CD14-positive monocyte (primary cell): ENCODE measurements at regions of chr12 and their contacts with region 1.

Region 1: GRCh38 chr12:133037207-133038005 is at the start of gene ZNF84:
- DNase-seq: peak; percentile 96 to 98 (median 97)
- H3K4me3 ChIP-seq: peak within 1 kb of the TSS; percentile 48 to 78 (median 53)
- H3K4me3 Mint-ChIP-seq: peak within 1 kb of the TSS; percentile 83 to 95
- H3K27ac ChIP-seq: peak within 1 kb of the TSS; percentile 77 to 84
- H3K27ac Mint-ChIP-seq: peak within 1 kb of the TSS; percentile 80 to 96 (median 91)
- H3K4me1 ChIP-seq: peaks cover 12 to 15% of the 10 kb centered on the region in 2 donors
- H3K4me1 Mint-ChIP-seq: peaks cover 7% of the 10 kb centered on the region
- H3K27me3 ChIP-seq: no peaks in the 10 kb centered on the region
- H3K27me3 Mint-ChIP-seq: peaks cover 2 to 4% (median 3%) of the 10 kb centered on the region in 3 donors
- CTCF ChIP-seq: no peak
- polyA plus RNA-seq, gene ZNF84: 3.3 to 5.1 (median 5.1) TPM

Region 2: GRCh38 chr12:132887513-132888351 is 149.7 kb before region 1 on chr12 and contains the start of gene CHFR:
- intact Hi-C with region 1: loop called in 1 of 2 experiments (anchors 5 kb)
- DNase-seq: peak; percentile 98 to 99 (median 99)
- H3K4me3 ChIP-seq: peak within 1 kb of the TSS; percentile 85 to 92 (median 86)
- H3K4me3 Mint-ChIP-seq: peak within 1 kb of the TSS; percentile 97 to 98
- H3K27ac ChIP-seq: peak within 1 kb of the TSS; percentile 89 to 99
- H3K27ac Mint-ChIP-seq: peak within 1 kb of the TSS; percentile 98 to 100 (median 99)
- H3K4me1 ChIP-seq: peaks cover 10 to 15% of the 10 kb centered on the region in 2 donors
- H3K4me1 Mint-ChIP-seq: peaks cover 19% of the 10 kb centered on the region
- H3K27me3 ChIP-seq: no peaks in the 10 kb centered on the region
- H3K27me3 Mint-ChIP-seq: peaks cover 3 to 10% (median 8%) of the 10 kb centered on the region in 3 donors
- CTCF ChIP-seq: no peak
- polyA plus RNA-seq, gene CHFR: 28.0 to 76.3 (median 39.3) TPM

Region 3: GRCh38 chr12:132908145-132909044 is 129.0 kb before region 1 on chr12:
- intact Hi-C with region 1: loop called in 1 of 2 experiments (anchors 10 kb)
- DNase-seq: peak; percentile 56 to 66 (median 66)
- H3K4me3 ChIP-seq: peak overlapping the region; percentile 13 to 76 (median 45)
- H3K4me3 Mint-ChIP-seq: peak overlapping the region; percentile 80 to 94
- H3K27ac ChIP-seq: no peak overlapping the region
- H3K27ac Mint-ChIP-seq: peak overlapping the region in 5 of 7 donors; percentile 21 to 90 (median 70)
- H3K4me1 ChIP-seq: peaks cover 13 to 17% of the 10 kb centered on the region in 2 donors
- H3K4me1 Mint-ChIP-seq: peaks cover 16% of the 10 kb centered on the region
- H3K27me3 ChIP-seq: peaks cover 15 to 52% of the 10 kb centered on the region in 2 donors
- H3K27me3 Mint-ChIP-seq: peaks cover 43 to 59% (median 58%) of the 10 kb centered on the region in 3 donors
- CTCF ChIP-seq: no peak

Region 4: GRCh38 chr12:132956011-132956788 is 81.2 kb before region 1 on chr12 and contains the start of gene ZNF605:
- intact Hi-C with region 1: loop called in 1 of 2 experiments (anchors 5 kb)
- DNase-seq: peak; percentile 64 to 80 (median 69)
- H3K4me3 ChIP-seq: peak within 1 kb of the TSS; percentile 62 to 95 (median 94)
- H3K4me3 Mint-ChIP-seq: peak within 1 kb of the TSS; percentile 92
- H3K27ac ChIP-seq: peak within 1 kb of the TSS; percentile 36 to 76
- H3K27ac Mint-ChIP-seq: peak within 1 kb of the TSS; percentile 25 to 91 (median 82)
- H3K4me1 ChIP-seq: peaks cover 12 to 15% of the 10 kb centered on the region in 2 donors
- H3K4me1 Mint-ChIP-seq: peaks cover 19% of the 10 kb centered on the region
- H3K27me3 ChIP-seq: no peaks in the 10 kb centered on the region
- H3K27me3 Mint-ChIP-seq: peaks cover 0 to 3% (median 0%) of the 10 kb centered on the region in 3 donors
- CTCF ChIP-seq: no peak
- polyA plus RNA-seq, gene ZNF605: 0.32 to 1.9 (median 0.80) TPM

Region 5: GRCh38 chr12:132986001-132986912 is 51.1 kb before region 1 on chr12 and contains the start of gene ZNF26:
- intact Hi-C with region 1: loop called (anchors 2 kb)
- DNase-seq: peak; percentile 86 to 87 (median 86)
- H3K4me3 ChIP-seq: peak within 1 kb of the TSS; percentile 54 to 87 (median 74)
- H3K4me3 Mint-ChIP-seq: peak within 1 kb of the TSS; percentile 89 to 95
- H3K27ac ChIP-seq: peak within 1 kb of the TSS; percentile 54 to 89
- H3K27ac Mint-ChIP-seq: peak within 1 kb of the TSS; percentile 85 to 95 (median 92)
- H3K4me1 ChIP-seq: peaks cover 17 to 24% of the 10 kb centered on the region in 2 donors
- H3K4me1 Mint-ChIP-seq: peaks cover 14% of the 10 kb centered on the region
- H3K27me3 ChIP-seq: no peaks in the 10 kb centered on the region
- H3K27me3 Mint-ChIP-seq: peaks cover 0 to 2% (median 0%) of the 10 kb centered on the region in 3 donors
- CTCF ChIP-seq: no peak
- polyA plus RNA-seq, gene ZNF26: 3.3 to 17.6 (median 3.8) TPM

Region 6: GRCh38 chr12:133080368-133081158 is 43.2 kb after region 1 on chr12 and contains the start of gene ZNF140:
- intact Hi-C with region 1: loop called (anchors 1 kb)
- DNase-seq: peak; percentile 94 to 96 (median 95)
- H3K4me3 ChIP-seq: peak within 1 kb of the TSS; percentile 78 to 86 (median 81)
- H3K4me3 Mint-ChIP-seq: peak within 1 kb of the TSS in 1 of 2 donors; percentile 26
- H3K27ac ChIP-seq: peak within 1 kb of the TSS; percentile 96 to 98
- H3K27ac Mint-ChIP-seq: peak within 1 kb of the TSS in 4 of 7 donors; percentile 40 to 82 (median 51)
- H3K4me1 ChIP-seq: peaks cover 11 to 12% of the 10 kb centered on the region in 2 donors
- H3K4me1 Mint-ChIP-seq: peaks cover 5% of the 10 kb centered on the region
- H3K27me3 ChIP-seq: no peaks in the 10 kb centered on the region
- H3K27me3 Mint-ChIP-seq: peaks cover 0 to 4% (median 0%) of the 10 kb centered on the region in 3 donors
- CTCF ChIP-seq: peak; percentile 30
- polyA plus RNA-seq, gene ZNF140: 6.2 to 11.8 (median 6.3) TPM

Region 7: GRCh38 chr12:133130038-133130807 is 92.8 kb after region 1 on chr12 and contains the starts of genes ZNF10 and ZNF891:
- intact Hi-C with region 1: loop called (anchors 2 to 5 kb)
- DNase-seq: peak; percentile 81 to 93 (median 87)
- H3K4me3 ChIP-seq: peak within 1 kb of the TSS; percentile 55 to 74 (median 72)
- H3K4me3 Mint-ChIP-seq: peak within 1 kb of the TSS; percentile 86 to 92
- H3K27ac ChIP-seq: peak within 1 kb of the TSS; percentile 83 to 88
- H3K27ac Mint-ChIP-seq: peak within 1 kb of the TSS; percentile 88 to 97 (median 95)
- H3K4me1 ChIP-seq: peaks cover 14% of the 10 kb centered on the region in 2 donors
- H3K4me1 Mint-ChIP-seq: peaks cover 15% of the 10 kb centered on the region
- H3K27me3 ChIP-seq: no peaks in the 10 kb centered on the region
- H3K27me3 Mint-ChIP-seq: peaks cover 0 to 3% (median 1%) of the 10 kb centered on the region in 3 donors
- CTCF ChIP-seq: no peak
- polyA plus RNA-seq, gene ZNF10: 0.68 to 1.00 (median 0.79) TPM
- polyA plus RNA-seq, gene ZNF891: 0.08 to 0.45 (median 0.18) TPM